RWPE1 (cell line): ENCODE measurements at regions of chr4 and their contacts with region 1.

Region 1: GRCh38 chr4:39741401-39741800 is 43.5 kb downstream of the UBE2K start:
- DNase-seq: no peak
- H3K27ac ChIP-seq: no peak overlapping the region
- CTCF ChIP-seq: no peak

Region 2: DNA sequence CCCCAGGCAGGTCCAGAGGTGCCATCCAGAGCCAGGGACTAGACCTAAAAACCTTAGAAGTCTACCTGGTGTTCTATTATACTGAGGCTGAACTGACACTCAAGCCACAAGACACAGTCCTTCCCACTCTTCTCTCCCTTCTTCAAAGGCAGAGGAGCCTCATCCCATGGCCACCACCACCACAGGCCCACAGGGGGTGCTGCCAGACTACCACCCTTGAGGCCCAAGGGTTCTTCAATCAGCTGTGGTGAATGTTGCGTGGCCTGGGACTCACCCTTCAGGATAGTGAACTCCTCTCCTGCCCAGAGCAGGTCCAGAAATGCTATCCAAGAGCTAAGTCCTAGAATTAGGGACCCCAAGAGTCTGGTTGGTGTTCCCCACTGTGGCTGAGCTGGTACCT is 357.7 kb before region 1 on chr4:
- CTCF ChIA-PET with region 1: no interaction called
- POLR2A ChIA-PET with region 1: no interaction called
- DNase-seq: no peak
- H3K27ac ChIP-seq: no peak overlapping the region
- CTCF ChIP-seq: no peak

Region 3: DNA sequence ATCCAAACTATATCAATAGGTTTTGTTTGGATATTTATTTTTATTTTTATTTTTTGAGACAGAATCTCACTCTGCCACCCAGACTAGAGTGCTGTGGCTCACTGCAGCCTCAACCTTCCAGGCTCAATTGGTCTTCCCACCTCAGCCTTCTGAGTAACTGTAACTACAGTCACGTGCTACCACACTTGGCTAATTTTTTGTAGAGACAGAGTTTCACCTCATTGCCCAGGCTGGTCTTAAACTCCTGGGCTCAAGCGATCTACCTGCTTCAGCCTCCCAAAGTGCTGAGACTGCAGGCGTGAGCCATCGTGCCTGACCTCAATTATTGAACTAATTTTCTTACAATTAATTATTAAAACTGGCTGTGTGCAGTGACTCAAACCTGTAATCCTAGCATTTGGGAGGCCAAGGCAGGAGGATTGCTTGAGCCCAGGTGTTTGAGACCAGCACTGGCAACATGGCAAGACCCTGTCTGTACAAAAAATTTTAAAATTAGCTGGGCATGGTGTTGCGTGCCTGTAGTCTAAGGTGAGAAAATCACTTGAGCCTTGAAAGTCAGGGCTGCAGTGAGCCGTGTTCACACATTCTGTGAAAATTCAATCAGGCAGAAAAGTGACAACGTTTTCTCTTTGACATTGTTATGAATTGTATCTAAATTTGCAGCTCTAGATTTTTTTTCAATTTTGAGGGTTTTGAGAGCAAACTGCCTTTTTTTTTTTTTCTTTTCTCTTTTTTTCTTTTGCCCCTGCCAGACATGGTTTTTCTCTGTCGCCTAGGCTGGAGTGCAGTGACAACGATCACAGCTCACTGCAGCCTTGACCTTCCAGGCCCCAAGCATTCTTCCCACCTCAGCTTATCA is 22.5 kb after region 1 on chr4:
- CTCF ChIA-PET with region 1: interaction called, 11 read pairs
- POLR2A ChIA-PET with region 1: no interaction called
- DNase-seq: no peak
- H3K27ac ChIP-seq: no peak overlapping the region
- CTCF ChIP-seq: no peak

Region 4: DNA sequence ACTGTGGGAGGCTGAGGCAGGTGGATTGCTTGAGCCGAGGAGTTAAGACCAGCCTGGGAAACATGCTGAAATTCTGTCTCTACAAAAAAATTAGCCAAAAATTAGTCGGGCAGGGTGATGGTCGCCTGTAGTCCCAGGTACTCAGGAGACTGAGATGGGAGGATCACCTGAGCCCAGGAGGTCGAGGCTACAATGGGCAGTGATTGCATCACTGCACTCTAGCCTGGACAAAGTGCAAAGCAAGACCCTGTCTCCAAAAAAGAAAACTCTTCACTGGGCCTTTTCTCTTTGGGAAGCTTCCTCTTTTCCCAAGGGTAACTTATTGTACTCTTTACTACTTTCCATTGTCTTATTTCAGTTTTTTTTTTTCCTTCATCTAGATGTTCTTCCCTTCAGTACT is 45.4 kb after region 1 on chr4:
- CTCF ChIA-PET with region 1: no interaction called
- POLR2A ChIA-PET with region 1: no interaction called
- DNase-seq: no peak
- H3K27ac ChIP-seq: no peak overlapping the region
- CTCF ChIP-seq: no peak